RWPE1 (cell line): ENCODE measurements at regions of chrX and their contacts with region 1.

Region 1: DNA sequence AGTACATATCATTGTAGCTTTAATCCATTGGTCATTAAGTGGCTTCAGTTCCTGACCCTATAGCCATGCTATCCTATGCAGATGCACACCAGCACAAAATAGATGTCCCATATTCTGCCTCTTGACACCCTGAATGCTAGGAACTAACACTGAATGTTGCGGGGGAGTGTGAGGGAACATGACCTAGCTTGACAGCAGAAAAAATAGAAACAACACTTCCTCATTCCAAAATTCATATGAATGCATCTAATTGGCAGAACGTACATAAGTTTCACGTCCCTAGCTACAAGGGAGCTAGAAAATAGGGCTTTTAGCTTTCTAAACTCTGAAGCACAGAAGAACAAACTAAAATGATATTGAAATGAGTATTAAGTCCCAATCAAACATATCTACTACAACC is 14.4 kb upstream of the DCAF8L1 start:
- DNase-seq: no peak
- H3K27ac ChIP-seq: no peak overlapping the region
- CTCF ChIP-seq: no peak

Region 2: GRCh38 chrX:28120076-28120475 is 124.5 kb after region 1 on chrX:
- CTCF ChIA-PET with region 1: no interaction called
- POLR2A ChIA-PET with region 1: no interaction called
- DNase-seq: peak; percentile 26
- H3K27ac ChIP-seq: no peak overlapping the region
- CTCF ChIP-seq: no peak

Region 3: DNA sequence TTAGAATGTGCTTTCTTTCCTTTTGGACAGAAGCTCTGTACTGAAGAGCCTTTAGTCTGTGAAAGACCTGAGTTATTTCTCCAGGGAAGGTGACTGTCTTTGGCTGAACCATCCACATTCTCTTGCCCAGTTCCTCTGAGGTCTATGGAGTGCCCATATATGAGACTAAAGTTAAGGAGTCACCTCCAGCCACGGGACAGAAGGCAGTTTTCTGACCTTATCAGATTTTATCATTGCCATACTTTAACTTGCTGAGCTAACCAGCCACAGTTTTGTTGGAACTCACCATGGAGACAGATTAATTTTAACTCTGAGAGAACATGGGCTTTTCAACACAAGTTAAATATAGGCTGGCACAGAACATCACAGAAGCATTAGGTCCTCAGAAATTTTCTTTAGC is 617.9 kb after region 1 on chrX:
- CTCF ChIA-PET with region 1: interaction called, 10 read pairs
- POLR2A ChIA-PET with region 1: no interaction called
- DNase-seq: no peak
- H3K27ac ChIP-seq: no peak overlapping the region
- CTCF ChIP-seq: no peak